HAP-1 (cell line): ENCODE measurements at regions of chr11 and their contacts with region 1.

Region 1: DNA sequence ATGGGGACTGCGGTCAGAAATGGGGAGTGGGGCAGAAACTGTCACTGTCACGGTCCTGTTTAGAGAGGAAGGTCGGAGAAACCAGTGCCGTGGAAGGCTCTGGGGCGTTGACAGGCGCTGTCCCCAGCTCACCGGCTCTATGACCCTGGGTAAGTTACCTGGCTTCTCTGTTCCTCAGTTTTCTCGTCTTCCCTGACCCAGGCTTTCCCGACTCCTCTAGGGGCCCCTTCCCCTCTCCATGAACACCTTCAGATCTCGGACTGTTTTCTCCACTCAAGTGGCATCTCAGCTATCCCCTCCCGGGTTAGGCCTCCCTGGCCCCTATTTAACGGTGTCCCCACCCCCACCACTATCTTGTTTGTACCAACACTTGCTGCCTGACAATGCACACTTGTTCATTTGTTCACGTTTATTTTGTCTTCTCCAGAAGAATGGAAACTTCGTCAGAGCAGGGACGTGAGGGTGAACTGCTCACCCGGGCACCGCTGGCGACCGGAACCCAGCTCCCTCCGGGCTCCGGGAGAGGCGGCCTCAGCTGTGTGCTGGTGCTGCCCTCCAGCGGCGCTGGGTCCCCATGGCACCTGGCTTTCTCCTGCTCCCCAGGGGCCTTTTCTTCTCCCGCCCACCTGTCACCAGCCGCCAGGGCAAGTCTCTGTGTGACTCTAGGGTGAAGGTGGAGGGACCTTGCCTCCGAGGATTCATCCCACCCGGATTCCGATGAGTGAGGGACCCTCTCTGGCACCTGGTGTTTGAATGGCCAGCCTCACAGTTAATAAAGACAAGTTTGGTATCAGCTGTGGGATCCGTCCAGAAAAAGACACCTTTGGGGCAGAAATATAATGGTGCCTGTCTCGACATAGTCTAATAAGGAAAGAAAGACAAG is 33.1 kb upstream of the SLC35C1 start:
- DNase-seq: peak; percentile 83 to 91
- H3K4me3 ChIP-seq: peak overlapping the region; percentile 29
- H3K4me1 ChIP-seq: peaks cover 4% of the 10 kb centered on the region; the same call in 1 of the 2 replicates
- H3K27me3 ChIP-seq: peaks cover 4% of the 10 kb centered on the region; the same call in 1 of the 2 replicates

Region 2: GRCh38 chr11:44936525-44936924 is 835.3 kb before region 1 on chr11:
- in situ Hi-C with region 1: loop called (anchors 25 kb)
- DNase-seq: peak; percentile 72 to 87
- H3K4me3 ChIP-seq: no peak overlapping the region
- H3K4me1 ChIP-seq: no peaks in the 10 kb centered on the region
- H3K27me3 ChIP-seq: no peaks in the 10 kb centered on the region

Region 3: GRCh38 chr11:45147017-45147728 is 624.6 kb before region 1 on chr11:
- in situ Hi-C with region 1: loop called (anchors 25 kb)
- DNase-seq: peak; percentile 88 to 94
- H3K4me3 ChIP-seq: peak overlapping the region; percentile 56
- H3K4me1 ChIP-seq: peaks cover 4% of the 10 kb centered on the region; the same call in 1 of the 2 replicates
- H3K27me3 ChIP-seq: no peaks in the 10 kb centered on the region; the same call in 1 of the 2 replicates

Region 4: GRCh38 chr11:45365961-45366618 is 405.7 kb before region 1 on chr11:
- in situ Hi-C with region 1: loop called (anchors 10 kb)
- DNase-seq: no peak
- H3K4me3 ChIP-seq: no peak overlapping the region
- H3K4me1 ChIP-seq: peaks cover 9% of the 10 kb centered on the region
- H3K27me3 ChIP-seq: peaks cover 17% of the 10 kb centered on the region

Region 5: DNA sequence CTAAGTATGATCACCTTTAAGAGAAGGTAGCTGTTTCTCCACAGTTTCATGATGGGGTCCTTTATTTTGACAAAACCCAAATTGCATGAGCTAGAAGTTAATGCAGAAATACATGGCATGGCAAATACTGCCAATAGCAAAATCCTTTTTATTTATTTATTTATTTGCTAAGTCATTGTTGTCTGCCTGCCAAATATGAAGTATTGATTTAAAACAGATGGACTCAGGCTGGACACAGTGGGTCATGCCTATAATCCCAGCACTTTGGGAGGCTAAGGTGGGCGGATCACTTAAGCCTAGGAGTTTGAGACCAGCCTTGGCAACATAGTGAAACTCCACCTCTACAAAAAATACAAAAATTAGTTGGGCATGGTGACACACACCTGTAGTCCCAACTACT is 203.0 kb after region 1 on chr11:
- in situ Hi-C with region 1: no loop called
- DNase-seq: no peak
- H3K4me3 ChIP-seq: no peak overlapping the region
- H3K4me1 ChIP-seq: no peaks in the 10 kb centered on the region
- H3K27me3 ChIP-seq: no peaks in the 10 kb centered on the region